ENCODE measurements at regions of chr17 and their contacts with region 1.

Region 1: GRCh38 chr17:67411397-67411796 is 34.3 kb downstream of the PITPNC1 start:
- DNase-seq: no peak
- H3K4me3 ChIP-seq: no peak overlapping the region
- H3K27ac ChIP-seq: no peak overlapping the region
- H3K4me1 ChIP-seq: peaks cover 19% of the 10 kb centered on the region
- H3K27me3 ChIP-seq: no peaks in the 10 kb centered on the region
- CTCF ChIP-seq: no peak

Region 2: DNA sequence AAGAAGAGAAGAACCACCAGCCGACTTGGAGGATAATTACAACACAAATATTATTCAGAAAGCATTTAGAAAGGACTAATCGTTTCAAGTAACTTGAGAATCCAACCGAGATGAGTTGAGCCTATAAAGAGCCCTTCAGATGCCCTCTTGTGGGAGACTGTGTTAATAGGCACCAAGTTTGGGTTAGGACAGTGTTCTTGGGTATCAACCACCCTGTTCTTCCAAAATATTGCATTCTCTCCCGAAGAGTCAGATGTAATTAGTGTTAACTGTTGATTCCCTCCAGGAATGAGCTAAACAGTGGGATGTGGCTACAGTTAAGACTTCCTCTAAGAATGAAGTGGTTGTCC is 218.5 kb after region 1 on chr17:
- intact Hi-C with region 1: loop called (anchors 10 kb)
- DNase-seq: no peak
- H3K4me3 ChIP-seq: no peak overlapping the region
- H3K27ac ChIP-seq: peak overlapping the region; percentile 2
- H3K4me1 ChIP-seq: peaks cover 35% of the 10 kb centered on the region
- H3K27me3 ChIP-seq: no peaks in the 10 kb centered on the region
- CTCF ChIP-seq: peak; percentile 56

Measured in left ventricle myocardium inferior (tissue), 1 donor.